ENCODE measurements at regions of chrX and their contacts with region 1.

Region 1: GRCh38 chrX:118603981-118604380 is 108.4 kb downstream of the DOCK11 start:
- DNase-seq: peak; percentile 27 to 43 (median 33)
- H3K4me3 ChIP-seq: no peak overlapping the region
- H3K4me3 Mint-ChIP-seq: peak overlapping the region in 3 of 8 donors; percentile 20 to 63 (median 56)
- H3K27ac ChIP-seq: no peak overlapping the region
- H3K27ac Mint-ChIP-seq: peak overlapping the region in 5 of 7 donors; percentile 2 to 89 (median 42)
- H3K4me1 ChIP-seq: peaks cover 11% of the 10 kb centered on the region
- H3K4me1 Mint-ChIP-seq: peaks cover 11 to 16% (median 15%) of the 10 kb centered on the region in 4 donors
- H3K27me3 ChIP-seq: no peaks in the 10 kb centered on the region
- H3K27me3 Mint-ChIP-seq: no peaks in the 10 kb centered on the region

Region 2: GRCh38 chrX:118392716-118393115 is 211.3 kb before region 1 on chrX:
- CTCF ChIA-PET with region 1: no interaction called
- POLR2A ChIA-PET with region 1: no interaction called
- intact Hi-C with region 1: no loop called
- DNase-seq: no peak
- H3K4me3 ChIP-seq: no peak overlapping the region
- H3K4me3 Mint-ChIP-seq: no peak overlapping the region
- H3K27ac ChIP-seq: no peak overlapping the region
- H3K27ac Mint-ChIP-seq: peak overlapping the region in 1 of 7 donors; percentile 30
- H3K4me1 ChIP-seq: no peaks in the 10 kb centered on the region
- H3K4me1 Mint-ChIP-seq: peaks cover 0 to 3% (median under 1%) of the 10 kb centered on the region in 4 donors
- H3K27me3 ChIP-seq: no peaks in the 10 kb centered on the region
- H3K27me3 Mint-ChIP-seq: no peaks in the 10 kb centered on the region

Region 3: GRCh38 chrX:118459494-118459893 is 144.5 kb before region 1 on chrX:
- CTCF ChIA-PET with region 1: interaction called, 55 read pairs
- POLR2A ChIA-PET with region 1: interaction called, 5 read pairs
- intact Hi-C with region 1: loop called (anchors 1 kb)
- DNase-seq: peak in 4 of 5 donors; percentile 32 to 39 (median 35)
- H3K4me3 ChIP-seq: no peak overlapping the region
- H3K4me3 Mint-ChIP-seq: no peak overlapping the region
- H3K27ac ChIP-seq: no peak overlapping the region
- H3K27ac Mint-ChIP-seq: peak overlapping the region in 2 of 7 donors; percentile 19 to 57
- H3K4me1 ChIP-seq: no peaks in the 10 kb centered on the region
- H3K4me1 Mint-ChIP-seq: peaks cover 2 to 5% (median 4%) of the 10 kb centered on the region in 4 donors
- H3K27me3 ChIP-seq: no peaks in the 10 kb centered on the region
- H3K27me3 Mint-ChIP-seq: no peaks in the 10 kb centered on the region

Region 4: GRCh38 chrX:118484220-118484903 is 119.6 kb before region 1 on chrX:
- CTCF ChIA-PET with region 1: interaction called, 20 read pairs
- POLR2A ChIA-PET with region 1: no interaction called
- intact Hi-C with region 1: no loop called
- DNase-seq: no peak
- H3K4me3 ChIP-seq: no peak overlapping the region
- H3K4me3 Mint-ChIP-seq: no peak overlapping the region
- H3K27ac ChIP-seq: no peak overlapping the region
- H3K27ac Mint-ChIP-seq: no peak overlapping the region
- H3K4me1 ChIP-seq: no peaks in the 10 kb centered on the region
- H3K4me1 Mint-ChIP-seq: no peaks in the 10 kb centered on the region
- H3K27me3 ChIP-seq: no peaks in the 10 kb centered on the region
- H3K27me3 Mint-ChIP-seq: no peaks in the 10 kb centered on the region

Region 5: GRCh38 chrX:118589227-118589626 is 14.8 kb before region 1 on chrX:
- CTCF ChIA-PET with region 1: interaction called, 13 read pairs
- POLR2A ChIA-PET with region 1: interaction called, 3 read pairs
- intact Hi-C with region 1: no loop called
- DNase-seq: no peak
- H3K4me3 ChIP-seq: no peak overlapping the region
- H3K4me3 Mint-ChIP-seq: no peak overlapping the region
- H3K27ac ChIP-seq: no peak overlapping the region
- H3K27ac Mint-ChIP-seq: peak overlapping the region in 2 of 7 donors; percentile 44 to 57
- H3K4me1 ChIP-seq: no peaks in the 10 kb centered on the region
- H3K4me1 Mint-ChIP-seq: peaks cover 0 to 1% (median 0%) of the 10 kb centered on the region in 4 donors
- H3K27me3 ChIP-seq: no peaks in the 10 kb centered on the region
- H3K27me3 Mint-ChIP-seq: no peaks in the 10 kb centered on the region

Region 6: DNA sequence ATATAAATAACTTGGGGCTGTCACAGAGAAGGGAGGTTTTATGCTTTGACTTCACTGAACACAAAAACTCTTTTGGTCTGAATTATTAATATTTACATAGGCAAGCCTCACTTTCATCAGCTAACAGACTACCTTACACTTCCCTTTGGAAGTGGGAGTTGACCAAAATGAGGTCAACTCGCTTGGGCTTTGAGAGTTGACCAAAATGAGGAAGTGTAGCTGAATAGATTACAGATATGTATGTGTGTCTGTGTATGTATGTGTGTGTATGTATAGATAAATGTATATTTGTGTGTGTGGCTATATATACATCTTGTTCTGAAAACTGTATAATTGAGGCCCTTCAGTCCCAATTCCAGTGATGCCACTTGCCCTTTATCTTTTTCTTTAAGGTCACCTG is 10.2 kb after region 1 on chrX:
- CTCF ChIA-PET with region 1: interaction called, 17 read pairs
- POLR2A ChIA-PET with region 1: no interaction called
- intact Hi-C with region 1: no loop called
- DNase-seq: no peak
- H3K4me3 ChIP-seq: no peak overlapping the region
- H3K4me3 Mint-ChIP-seq: no peak overlapping the region
- H3K27ac ChIP-seq: no peak overlapping the region
- H3K27ac Mint-ChIP-seq: peak overlapping the region in 1 of 7 donors; percentile 33
- H3K4me1 ChIP-seq: no peaks in the 10 kb centered on the region
- H3K4me1 Mint-ChIP-seq: peaks cover 0 to 5% (median 2%) of the 10 kb centered on the region in 4 donors
- H3K27me3 ChIP-seq: no peaks in the 10 kb centered on the region
- H3K27me3 Mint-ChIP-seq: no peaks in the 10 kb centered on the region

Region 7: DNA sequence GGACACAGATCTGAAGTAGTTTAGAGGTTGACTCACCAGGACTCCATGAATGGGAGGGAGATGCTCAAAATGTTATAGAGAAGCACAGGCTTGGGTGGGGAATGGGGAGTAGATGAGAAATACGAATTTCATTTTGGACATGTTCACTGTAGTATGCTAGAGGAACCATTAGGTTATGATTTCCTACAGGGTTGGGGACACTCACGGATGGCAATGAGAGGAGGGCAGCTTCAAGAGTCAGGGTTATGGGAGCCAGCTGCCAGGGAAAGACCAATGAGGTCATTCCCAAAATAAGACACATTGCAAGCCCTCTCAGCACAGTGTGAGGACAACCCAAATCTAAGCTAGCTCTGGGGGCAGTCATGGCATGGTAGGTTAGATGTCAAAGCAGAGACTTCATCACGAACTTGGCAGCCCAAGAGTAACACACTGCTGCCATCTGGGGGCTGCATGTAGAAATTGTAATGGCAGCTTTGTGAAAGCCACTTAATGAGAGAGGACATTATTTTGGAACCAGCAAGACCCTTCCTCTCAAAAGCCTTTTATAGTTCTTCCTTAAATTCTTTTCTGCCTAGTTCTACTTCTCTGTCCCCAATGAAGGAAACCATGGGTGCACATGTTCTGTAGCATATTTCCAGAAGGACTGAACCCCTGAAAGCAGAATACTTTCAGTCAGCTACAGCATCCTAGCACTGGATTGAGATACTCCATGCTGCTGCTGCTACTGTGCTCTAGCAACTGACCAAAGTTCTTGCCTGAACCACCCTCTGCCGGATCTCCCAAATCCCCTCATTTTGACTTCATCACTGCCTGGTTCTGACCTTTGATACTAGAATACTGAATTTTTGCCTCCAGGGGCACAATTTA is 203.4 kb after region 1 on chrX:
- CTCF ChIA-PET with region 1: no interaction called
- POLR2A ChIA-PET with region 1: no interaction called
- intact Hi-C with region 1: loop called (anchors 1 kb)
- DNase-seq: peak in 4 of 5 donors; percentile 14 to 22 (median 18)
- H3K4me3 ChIP-seq: no peak overlapping the region
- H3K4me3 Mint-ChIP-seq: no peak overlapping the region
- H3K27ac ChIP-seq: no peak overlapping the region
- H3K27ac Mint-ChIP-seq: no peak overlapping the region
- H3K4me1 ChIP-seq: no peaks in the 10 kb centered on the region
- H3K4me1 Mint-ChIP-seq: no peaks in the 10 kb centered on the region
- H3K27me3 ChIP-seq: no peaks in the 10 kb centered on the region
- H3K27me3 Mint-ChIP-seq: peaks cover 4 to 6% of the 10 kb centered on the region in 2 donors

Measured in CD4-positive, alpha-beta memory T cell (primary cell).